GM13976 (cell line): ENCODE measurements at regions of chr11 and their contacts with region 1.

Region 1: GRCh38 chr11:78228467-78228866 is 39.7 kb downstream of the USP35 start:
- DNase-seq: peak; percentile 74
- CTCF ChIP-seq: peak; percentile 51

Region 2: GRCh38 chr11:78050964-78051831 is 177.3 kb before region 1 on chr11:
- in situ Hi-C with region 1: no loop called
- DNase-seq: no peak
- CTCF ChIP-seq: no peak

Region 3: DNA sequence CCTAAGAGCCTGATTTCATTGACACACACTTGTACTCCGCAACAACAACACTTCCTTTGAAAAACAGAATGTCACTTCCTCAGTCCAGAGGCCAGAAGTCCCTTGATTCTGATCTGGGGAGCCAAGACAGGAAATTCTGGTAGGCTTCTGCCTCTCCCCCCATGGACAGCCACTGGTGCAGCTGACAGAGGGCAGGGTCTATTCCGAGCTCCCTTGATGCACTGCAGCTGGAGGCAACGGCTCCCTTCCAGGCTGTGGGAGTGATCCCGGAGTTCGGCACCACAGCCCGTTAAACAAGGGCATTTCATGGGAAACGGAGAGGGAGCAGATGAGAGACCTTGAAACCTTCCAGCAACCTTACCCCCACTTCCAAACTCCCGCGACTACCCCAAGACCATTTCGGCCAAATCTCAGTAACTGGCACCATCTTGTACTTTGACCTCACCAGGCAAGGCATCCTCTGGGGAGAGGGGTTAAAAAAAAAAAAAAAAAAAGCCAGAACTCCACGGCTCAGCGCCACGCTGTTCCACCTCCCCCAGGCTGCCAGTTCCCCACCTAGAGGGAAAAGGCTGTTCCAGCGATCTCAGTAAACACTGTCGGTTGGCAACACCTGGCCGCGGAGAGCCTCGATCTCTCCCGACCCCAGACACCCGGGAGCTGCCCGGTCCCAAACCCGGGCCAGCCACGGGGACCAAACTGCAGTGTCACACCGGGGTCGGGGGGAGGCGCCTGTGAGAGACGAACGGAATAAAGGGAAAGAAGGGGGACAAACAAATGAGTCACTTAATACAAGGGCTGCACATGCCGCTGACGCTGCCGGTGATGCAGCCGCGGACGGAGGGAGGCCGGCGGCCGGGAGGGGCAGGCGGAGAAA is 188.1 kb after region 1 on chr11:
- in situ Hi-C with region 1: loop called (anchors 10 kb)
- DNase-seq: peak; percentile 82
- CTCF ChIP-seq: peak; percentile 73

Region 4: GRCh38 chr11:78564490-78565467 is 336.3 kb after region 1 on chr11:
- in situ Hi-C with region 1: loop called (anchors 10 kb)
- DNase-seq: peak; percentile 32
- CTCF ChIP-seq: peak; percentile 38

Region 5: DNA sequence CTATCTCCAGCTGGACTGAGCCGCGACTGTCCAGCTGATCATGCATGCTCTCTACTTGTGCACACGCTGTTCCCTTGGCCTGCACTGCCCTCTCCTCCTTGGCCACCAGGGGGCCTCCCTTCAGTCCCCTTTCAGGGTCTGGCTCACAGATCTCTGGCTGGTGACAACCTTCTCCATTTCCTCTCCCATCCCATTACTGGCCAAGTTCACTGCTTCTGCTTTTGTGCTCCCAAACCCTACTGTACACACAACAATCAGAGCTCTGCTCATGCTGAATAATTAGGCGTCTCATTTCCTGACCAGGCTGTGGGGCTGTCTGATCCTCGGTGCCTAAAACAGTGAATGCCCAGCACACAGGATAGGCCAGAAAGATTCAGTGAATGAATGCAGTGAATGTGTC is 570.2 kb after region 1 on chr11:
- in situ Hi-C with region 1: no loop called
- DNase-seq: peak; percentile 60
- CTCF ChIP-seq: peak; percentile 82